Head of caudate nucleus (tissue), 42 donors: ENCODE measurements at regions of chr1 and their contacts with region 1.

Region 1: GRCh38 chr1:54499360-54500106 is 48.5 kb upstream of the ACOT11 start:
- DNase-seq: peak in 31 of 42 donors; percentile 21 to 74 (median 52)

Region 2: GRCh38 chr1:54070171-54070837 is 429.2 kb before region 1 on chr1:
- intact Hi-C with region 1: loop called (anchors 10 kb)
- DNase-seq: no peak